SK-N-SH (cell line): ENCODE measurements at regions of chr15 and their contacts with region 1.

Region 1: DNA sequence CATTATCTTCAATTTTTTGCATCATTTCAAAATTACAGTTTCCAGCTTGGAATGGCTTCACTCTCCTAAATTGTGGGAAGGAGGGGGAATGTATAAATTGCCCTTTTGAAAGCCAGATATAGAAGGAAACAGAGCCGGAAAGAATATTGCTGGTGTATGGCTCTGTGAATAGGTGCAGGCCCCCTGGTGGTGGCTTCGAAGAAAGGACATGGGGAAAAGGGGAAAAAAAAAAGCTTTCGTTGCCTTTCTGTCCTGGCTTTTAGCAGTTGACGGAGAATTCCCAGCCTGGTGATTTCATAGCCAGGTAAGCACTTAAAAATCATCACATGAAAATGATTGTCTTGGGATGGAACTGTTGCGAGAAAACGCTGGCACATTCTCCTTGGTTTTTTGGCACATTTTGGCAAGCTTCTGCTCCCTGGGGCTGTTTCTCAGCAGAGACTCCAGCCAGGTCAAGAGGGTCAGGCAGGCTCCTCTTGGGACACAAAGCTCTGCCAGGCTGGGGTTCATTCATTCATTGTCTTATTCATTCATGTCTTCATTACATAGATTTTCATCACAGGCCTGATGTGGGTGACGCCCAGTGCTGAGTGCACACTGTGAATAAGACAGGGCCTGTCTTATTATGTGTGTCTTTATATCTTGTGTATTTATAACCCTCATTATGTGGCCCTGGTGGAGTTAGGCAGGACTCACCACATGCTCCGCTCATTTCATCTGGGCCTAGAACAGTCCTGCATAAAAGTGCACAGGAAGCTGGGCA is 300.0 kb upstream of the TPM1 start:
- DNase-seq: peak; percentile 77
- H3K4me3 ChIP-seq: peak overlapping the region; percentile 5 to 55; a peak in 3 of 4 replicates
- H3K27ac ChIP-seq: peak overlapping the region; percentile 81 to 99
- H3K4me1 ChIP-seq: peaks cover 34 to 42% of the 10 kb centered on the region in 2 experiments
- H3K27me3 ChIP-seq: no peaks in the 10 kb centered on the region
- CTCF ChIP-seq: peak; percentile 93
- EP300 ChIP-seq: peak; percentile 56 to 57; a peak in 1 of 4 replicates
- RAD21 ChIP-seq: peak; percentile 73

Region 2: DNA sequence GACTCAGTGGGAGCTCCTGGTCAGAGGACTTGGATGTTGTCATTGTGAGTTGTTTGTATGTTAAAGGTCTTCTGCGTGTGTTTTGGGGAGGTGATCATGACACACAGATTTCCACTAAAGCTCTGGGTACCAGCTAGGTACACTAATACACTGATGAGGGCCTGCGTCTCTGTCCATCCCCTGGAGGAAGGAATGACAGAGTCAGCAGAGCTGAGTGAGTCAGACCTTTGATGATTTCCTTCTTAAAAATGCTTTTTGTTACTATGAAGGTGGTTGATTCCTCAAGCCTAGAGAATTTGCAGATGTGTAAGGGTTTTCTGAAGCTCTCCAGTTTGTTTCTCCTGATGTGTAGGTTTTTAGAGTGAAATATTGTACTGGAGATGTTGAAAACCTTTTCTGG is 124.2 kb before region 1 on chr15:
- CTCF ChIA-PET with region 1: interaction called, 11 read pairs
- POLR2A ChIA-PET with region 1: no interaction called
- DNase-seq: no peak
- H3K4me3 ChIP-seq: no peak overlapping the region
- H3K27ac ChIP-seq: peak overlapping the region; percentile 77 to 82
- H3K4me1 ChIP-seq: peaks cover 27 to 42% of the 10 kb centered on the region in 2 experiments
- H3K27me3 ChIP-seq: no peaks in the 10 kb centered on the region
- CTCF ChIP-seq: peak; percentile 61
- EP300 ChIP-seq: peak in 1 of 2 experiments; percentile 74; a peak in 1 of 4 replicates
- RAD21 ChIP-seq: no peak

Region 3: DNA sequence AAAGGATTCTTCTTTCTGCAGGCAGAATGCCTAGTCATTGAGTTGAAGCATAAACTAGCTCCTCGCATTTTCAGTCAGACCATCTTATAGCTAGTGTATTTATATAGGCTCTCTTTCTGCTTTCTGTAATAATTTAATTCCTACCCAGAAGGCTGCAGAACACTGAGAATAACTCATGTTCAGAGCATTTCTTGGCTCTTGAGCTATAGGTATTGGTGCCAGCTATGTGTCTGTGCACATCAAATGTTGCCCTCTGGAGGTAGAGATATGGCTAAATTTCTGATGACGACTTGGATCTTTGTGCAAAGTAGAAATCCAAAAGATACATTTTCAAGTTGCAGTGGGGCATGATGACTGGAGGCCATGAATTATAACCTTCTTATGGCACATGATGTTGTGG is 36.3 kb before region 1 on chr15:
- CTCF ChIA-PET with region 1: interaction called, 11 read pairs
- POLR2A ChIA-PET with region 1: interaction called, 3 read pairs
- DNase-seq: peak; percentile 56
- H3K4me3 ChIP-seq: no peak overlapping the region
- H3K27ac ChIP-seq: no peak overlapping the region
- H3K4me1 ChIP-seq: no peaks in the 10 kb centered on the region; a peak in 1 of 4 replicates
- H3K27me3 ChIP-seq: no peaks in the 10 kb centered on the region
- CTCF ChIP-seq: peak; percentile 66
- EP300 ChIP-seq: no peak
- RAD21 ChIP-seq: peak; percentile 85

Region 4: GRCh38 chr15:62732078-62732477 is 10.5 kb before region 1 on chr15:
- CTCF ChIA-PET with region 1: interaction called, 16 read pairs
- POLR2A ChIA-PET with region 1: no interaction called
- DNase-seq: no peak
- H3K4me3 ChIP-seq: no peak overlapping the region
- H3K27ac ChIP-seq: no peak overlapping the region
- H3K4me1 ChIP-seq: peaks cover 0 to 2% of the 10 kb centered on the region in 2 experiments; a peak in 1 of 4 replicates
- H3K27me3 ChIP-seq: no peaks in the 10 kb centered on the region
- CTCF ChIP-seq: no peak
- EP300 ChIP-seq: no peak
- RAD21 ChIP-seq: no peak

Region 5: GRCh38 chr15:62770752-62771151 is 28.2 kb after region 1 on chr15:
- CTCF ChIA-PET with region 1: interaction called, 14 read pairs
- POLR2A ChIA-PET with region 1: no interaction called
- DNase-seq: no peak
- H3K4me3 ChIP-seq: no peak overlapping the region
- H3K27ac ChIP-seq: peak overlapping the region; percentile 69 to 88; a peak in 3 of 4 replicates
- H3K4me1 ChIP-seq: peaks cover 14 to 37% of the 10 kb centered on the region in 2 experiments
- H3K27me3 ChIP-seq: no peaks in the 10 kb centered on the region
- CTCF ChIP-seq: no peak
- EP300 ChIP-seq: peak in 1 of 2 experiments; percentile 83; a peak in 1 of 4 replicates
- RAD21 ChIP-seq: no peak

Region 6: DNA sequence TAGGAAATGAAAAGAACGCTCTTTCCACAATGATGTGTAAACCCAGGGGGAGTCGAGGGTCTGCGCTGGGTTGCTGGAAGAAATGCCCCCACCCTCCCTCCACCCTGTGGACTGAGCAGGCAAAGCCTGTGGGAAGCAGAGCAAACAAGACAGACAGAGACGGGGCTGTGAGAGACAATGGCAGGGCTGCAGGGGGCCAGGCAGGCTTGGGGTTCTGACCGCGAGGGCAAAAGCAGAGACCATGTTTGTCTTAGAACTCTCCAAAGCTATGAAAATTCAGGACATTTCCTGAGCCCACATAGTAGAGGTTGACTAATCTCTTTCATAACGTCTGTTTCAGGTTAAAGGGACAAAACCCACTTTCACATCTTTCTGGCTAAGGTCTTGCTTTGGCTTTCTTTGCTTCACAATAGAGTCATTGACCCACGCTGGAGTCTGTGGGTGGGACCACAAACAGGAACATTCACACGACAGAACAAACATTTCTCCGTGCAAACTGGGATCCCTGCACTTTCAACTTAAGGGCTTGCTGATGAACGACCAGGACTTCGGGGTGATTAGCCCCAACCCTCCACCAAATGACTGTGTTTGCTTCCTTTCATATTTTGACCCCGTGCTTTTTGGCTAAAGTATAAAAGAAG is 144.0 kb after region 1 on chr15:
- CTCF ChIA-PET with region 1: no interaction called
- POLR2A ChIA-PET with region 1: no interaction called
- DNase-seq: no peak
- H3K4me3 ChIP-seq: peak overlapping the region; percentile 10 to 56; a peak in 3 of 4 replicates
- H3K27ac ChIP-seq: peak overlapping the region; percentile 89 to 97
- H3K4me1 ChIP-seq: peaks cover 30 to 37% of the 10 kb centered on the region in 2 experiments
- H3K27me3 ChIP-seq: no peaks in the 10 kb centered on the region
- CTCF ChIP-seq: no peak
- EP300 ChIP-seq: no peak; a peak in 1 of 4 replicates
- RAD21 ChIP-seq: no peak

Region 7: GRCh38 chr15:62958528-62959363 is 216.2 kb after region 1 on chr15:
- CTCF ChIA-PET with region 1: no interaction called
- POLR2A ChIA-PET with region 1: no interaction called
- DNase-seq: no peak
- H3K4me3 ChIP-seq: no peak overlapping the region
- H3K27ac ChIP-seq: no peak overlapping the region
- H3K4me1 ChIP-seq: peaks cover 0 to 8% of the 10 kb centered on the region in 2 experiments; a peak in 1 of 4 replicates
- H3K27me3 ChIP-seq: no peaks in the 10 kb centered on the region
- CTCF ChIP-seq: no peak
- EP300 ChIP-seq: no peak
- RAD21 ChIP-seq: no peak

Region 8: DNA sequence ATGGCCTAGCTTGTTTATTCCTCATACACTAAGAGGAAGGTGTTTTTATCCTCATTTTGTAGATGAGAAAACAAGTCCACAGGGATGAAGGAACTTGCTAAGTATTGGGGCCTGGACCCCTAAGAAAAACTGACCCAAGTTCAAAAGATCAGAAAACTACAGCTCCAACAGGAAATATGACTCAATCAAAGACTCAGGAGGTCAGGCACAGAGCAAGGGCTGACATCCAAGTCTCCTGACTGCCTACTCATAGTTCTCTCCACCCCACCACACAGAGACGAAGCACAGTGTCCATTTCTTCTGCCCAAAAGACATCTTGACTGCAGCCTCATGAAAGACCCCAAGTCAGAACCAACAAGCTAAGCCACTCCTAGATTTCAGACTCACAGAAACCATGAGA is 273.0 kb after region 1 on chr15:
- CTCF ChIA-PET with region 1: no interaction called
- POLR2A ChIA-PET with region 1: no interaction called
- DNase-seq: no peak
- H3K4me3 ChIP-seq: no peak overlapping the region
- H3K27ac ChIP-seq: peak overlapping the region; percentile 3 to 89; a peak in 3 of 4 replicates
- H3K4me1 ChIP-seq: peaks cover 13 to 56% of the 10 kb centered on the region in 2 experiments; a peak in 3 of 4 replicates
- H3K27me3 ChIP-seq: no peaks in the 10 kb centered on the region
- CTCF ChIP-seq: no peak
- EP300 ChIP-seq: peak in 1 of 2 experiments; percentile 63; a peak in 1 of 4 replicates
- RAD21 ChIP-seq: no peak